ENCODE measurements at regions of chr17 and their contacts with region 1.

Region 1: GRCh38 chr17:27805520-27806146 is 5.3 kb upstream of the NOS2 start:
- DNase-seq: no peak
- H3K4me3 ChIP-seq: peak overlapping the region; percentile 31 to 39
- H3K27ac ChIP-seq: peak overlapping the region; percentile 48
- H3K4me1 ChIP-seq: peaks cover 7% of the 10 kb centered on the region
- H3K27me3 ChIP-seq: no peaks in the 10 kb centered on the region
- CTCF ChIP-seq: peak; percentile 60 to 87 (median 65)
- POLR2A ChIP-seq: no peak

Region 2: DNA sequence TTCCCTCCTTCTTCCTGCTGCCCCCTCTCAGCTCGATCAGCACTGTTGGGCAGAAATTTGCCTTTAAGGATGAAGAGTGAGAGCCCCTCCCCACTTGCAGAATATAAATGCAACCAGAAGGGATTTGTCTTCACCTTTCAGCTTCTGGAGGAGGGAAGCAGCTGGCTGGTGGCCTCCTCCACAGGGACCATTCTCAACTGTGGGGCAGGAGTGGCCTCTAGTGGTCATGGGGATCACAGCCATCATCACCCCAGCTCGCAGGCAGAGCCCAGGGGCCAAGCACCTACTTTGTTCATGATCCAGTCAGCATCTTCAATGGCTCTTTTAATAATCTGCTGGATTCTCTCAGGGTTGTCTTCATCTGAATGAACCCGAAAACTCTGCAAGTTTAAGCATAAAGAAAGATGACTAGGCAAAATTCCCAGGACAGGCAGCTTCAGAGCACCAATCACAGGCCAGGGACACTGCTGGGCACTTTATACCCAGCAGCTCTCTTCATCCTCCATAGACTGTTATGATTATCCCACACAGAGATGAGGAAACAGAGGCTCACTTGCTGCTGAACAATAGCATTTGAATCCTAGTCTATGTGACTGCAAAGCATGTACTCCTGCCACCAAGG is 74.5 kb after region 1 on chr17:
- intact Hi-C with region 1: loop called (anchors 5 kb)
- DNase-seq: no peak
- H3K4me3 ChIP-seq: no peak overlapping the region
- H3K27ac ChIP-seq: no peak overlapping the region
- H3K4me1 ChIP-seq: no peaks in the 10 kb centered on the region
- H3K27me3 ChIP-seq: no peaks in the 10 kb centered on the region
- CTCF ChIP-seq: peak; percentile 51 to 55 (median 53)
- POLR2A ChIP-seq: no peak

Region 3: GRCh38 chr17:28252436-28252835 is 446.8 kb after region 1 on chr17:
- intact Hi-C with region 1: loop called (anchors 10 kb)
- DNase-seq: no peak
- H3K4me3 ChIP-seq: no peak overlapping the region
- H3K27ac ChIP-seq: no peak overlapping the region
- H3K4me1 ChIP-seq: peaks cover 11% of the 10 kb centered on the region
- H3K27me3 ChIP-seq: no peaks in the 10 kb centered on the region
- CTCF ChIP-seq: no peak
- POLR2A ChIP-seq: no peak

Region 4: DNA sequence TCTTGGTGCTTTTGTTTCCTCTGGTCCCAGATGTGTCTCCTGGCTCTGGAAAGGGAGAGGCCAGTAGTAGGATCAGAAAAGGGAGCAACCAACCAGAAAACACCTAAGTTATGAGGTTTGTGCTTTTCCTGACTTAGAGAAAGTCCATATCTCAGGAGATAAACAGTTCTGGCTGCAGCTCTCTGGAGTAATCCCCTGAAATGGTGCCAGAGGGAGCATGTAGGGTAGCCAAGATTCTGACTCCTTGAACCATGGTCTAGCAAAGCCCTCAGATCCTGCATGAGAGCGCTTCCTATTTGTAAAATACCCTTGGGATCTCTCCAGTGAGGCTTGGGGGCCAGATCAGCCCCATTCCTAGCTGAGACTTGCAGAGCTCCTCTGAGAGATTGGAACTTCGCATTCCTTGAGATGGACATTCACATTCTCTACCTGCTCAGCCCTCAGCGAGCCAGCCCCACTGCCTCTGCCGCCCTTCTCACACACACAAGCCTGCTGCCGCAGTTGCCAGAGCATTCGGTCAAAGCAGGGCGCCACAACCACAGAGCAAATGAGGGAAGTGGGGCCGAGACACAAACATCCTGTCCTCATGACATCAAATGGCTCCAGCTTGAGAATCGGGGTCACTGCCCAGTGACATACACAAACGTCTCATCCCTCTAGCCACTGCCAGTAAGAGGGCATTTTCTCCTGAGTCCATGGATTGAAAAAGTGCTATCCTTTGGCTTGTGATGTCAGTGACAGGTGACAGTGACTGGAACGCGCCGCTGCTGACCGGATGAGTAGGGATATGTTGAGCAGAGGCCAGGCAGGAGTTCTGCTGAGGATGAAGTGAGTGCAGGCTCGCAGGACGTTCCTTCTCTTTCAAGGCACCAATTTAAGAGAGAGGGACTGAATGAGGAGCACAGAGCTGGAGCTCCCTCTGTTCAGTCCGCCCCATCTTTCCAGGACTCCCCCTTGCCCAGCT is 1756.2 kb after region 1 on chr17:
- intact Hi-C with region 1: no loop called
- DNase-seq: no peak
- H3K4me3 ChIP-seq: no peak overlapping the region
- H3K27ac ChIP-seq: no peak overlapping the region
- H3K4me1 ChIP-seq: peaks cover 11% of the 10 kb centered on the region
- H3K27me3 ChIP-seq: no peaks in the 10 kb centered on the region
- CTCF ChIP-seq: no peak
- POLR2A ChIP-seq: no peak

Measured in vagina (tissue), 2 donors.